Thyroid gland (tissue), 4 donors: ENCODE measurements at regions of chr6 and their contacts with region 1.

Region 1: GRCh38 chr6:168370310-168370991 is 50.9 kb upstream of the DACT2 start:
- DNase-seq: peak; percentile 72 to 76
- H3K4me3 ChIP-seq: no peak overlapping the region
- H3K27ac ChIP-seq: no peak overlapping the region
- H3K4me1 ChIP-seq: no peaks in the 10 kb centered on the region
- H3K27me3 ChIP-seq: no peaks in the 10 kb centered on the region
- CTCF ChIP-seq: peak; percentile 83 to 96 (median 87)
- POLR2A ChIP-seq: no peak

Region 2: DNA sequence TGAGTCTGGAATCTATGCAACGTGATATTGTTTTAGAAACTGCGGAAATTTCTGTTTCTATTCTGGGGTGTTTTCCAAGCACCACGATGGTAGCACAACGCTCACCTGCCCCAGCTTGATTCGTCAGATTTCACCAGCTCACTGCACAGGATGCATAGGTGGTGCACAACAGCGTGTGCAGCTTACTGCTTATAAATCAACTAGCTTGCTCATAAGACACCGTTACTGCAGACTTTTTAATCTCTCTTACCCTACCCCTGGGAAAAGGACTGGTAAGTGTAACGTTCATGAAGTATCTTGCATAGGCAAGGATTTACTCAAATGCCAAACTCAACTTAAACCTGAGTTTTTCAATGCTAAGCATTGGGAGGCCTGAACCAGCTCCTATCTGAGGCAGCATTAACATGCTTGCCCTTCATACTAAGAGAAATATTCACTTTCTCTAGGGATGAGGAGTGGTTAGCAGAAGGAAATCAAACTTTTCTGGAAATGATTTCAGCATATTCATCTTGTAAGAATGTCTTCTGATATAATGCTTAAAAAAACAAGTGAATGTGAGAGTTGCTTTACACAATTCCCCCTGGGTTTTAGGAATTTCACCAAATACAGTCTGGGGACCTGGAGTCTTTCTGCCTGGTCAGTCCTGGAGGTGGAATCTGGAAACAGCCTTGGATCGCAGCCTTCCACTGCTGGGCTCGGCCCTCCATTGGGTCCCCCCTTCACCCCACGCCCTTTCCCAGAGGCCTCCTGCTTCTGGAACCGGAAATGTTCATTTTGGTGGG is 151.5 kb before region 1 on chr6:
- intact Hi-C with region 1: no loop called
- DNase-seq: peak; percentile 15 to 24
- H3K4me3 ChIP-seq: peak overlapping the region in 1 of 3 donors; percentile 11
- H3K27ac ChIP-seq: peak overlapping the region; percentile 77 to 83 (median 83)
- H3K4me1 ChIP-seq: peaks cover 25 to 32% of the 10 kb centered on the region in 2 donors
- H3K27me3 ChIP-seq: no peaks in the 10 kb centered on the region
- CTCF ChIP-seq: no peak
- POLR2A ChIP-seq: no peak

Region 3: GRCh38 chr6:168536665-168537539 is 166.5 kb after region 1 on chr6:
- intact Hi-C with region 1: loop called (anchors 5 kb)
- DNase-seq: no peak
- H3K4me3 ChIP-seq: no peak overlapping the region
- H3K27ac ChIP-seq: no peak overlapping the region
- H3K4me1 ChIP-seq: peaks cover 5 to 10% of the 10 kb centered on the region in 2 donors
- H3K27me3 ChIP-seq: no peaks in the 10 kb centered on the region
- CTCF ChIP-seq: no peak
- POLR2A ChIP-seq: no peak

Region 4: GRCh38 chr6:168658059-168658458 is 287.6 kb after region 1 on chr6:
- intact Hi-C with region 1: no loop called
- DNase-seq: no peak
- H3K4me3 ChIP-seq: no peak overlapping the region
- H3K27ac ChIP-seq: no peak overlapping the region
- H3K4me1 ChIP-seq: no peaks in the 10 kb centered on the region
- H3K27me3 ChIP-seq: no peaks in the 10 kb centered on the region
- CTCF ChIP-seq: peak in 3 of 6 experiments; percentile 7 to 14 (median 9)
- POLR2A ChIP-seq: no peak

Region 5: DNA sequence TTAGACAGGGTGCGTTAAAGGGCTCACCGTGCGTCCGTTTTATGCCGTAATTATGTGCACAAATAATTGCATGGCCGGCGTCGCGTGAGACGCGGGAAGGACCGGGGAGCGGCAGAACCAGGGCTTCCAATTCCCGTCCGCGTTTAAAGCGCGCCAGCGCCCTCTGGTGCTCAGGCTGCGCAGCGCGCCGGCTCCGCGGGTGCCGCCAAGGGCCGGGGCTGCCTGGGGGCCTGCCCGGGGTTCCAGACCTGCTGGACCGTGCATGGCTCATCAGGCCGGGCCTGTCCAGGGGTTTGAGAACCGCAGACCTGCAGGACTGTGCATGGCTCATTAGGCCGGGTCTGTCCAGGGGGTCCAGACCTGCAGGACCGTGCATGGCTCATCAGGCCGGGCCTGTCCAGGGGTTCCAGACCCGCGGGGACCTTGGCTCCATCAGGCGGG is 514.2 kb after region 1 on chr6:
- intact Hi-C with region 1: loop called (anchors 2 kb)
- DNase-seq: peak; percentile 60 to 65
- H3K4me3 ChIP-seq: peak overlapping the region in 1 of 3 donors; percentile 11
- H3K27ac ChIP-seq: no peak overlapping the region
- H3K4me1 ChIP-seq: no peaks in the 10 kb centered on the region
- H3K27me3 ChIP-seq: no peaks in the 10 kb centered on the region
- CTCF ChIP-seq: peak; percentile 66 to 97 (median 88)
- POLR2A ChIP-seq: no peak